Activated T-helper 2 cell treated with anti-CD3 and anti-CD28 coated beads, Interferon-gamma antibody, Interleukin-2, Interleukin-4, amounts not matched to agents 10 μg/mL and 5 μg/mL and 100 μg/mL, durations not matched to agents 14 hours and 24 hours and 36 hours (primary cell): ENCODE measurements at regions of chr18 and their contacts with region 1.

Region 1: DNA sequence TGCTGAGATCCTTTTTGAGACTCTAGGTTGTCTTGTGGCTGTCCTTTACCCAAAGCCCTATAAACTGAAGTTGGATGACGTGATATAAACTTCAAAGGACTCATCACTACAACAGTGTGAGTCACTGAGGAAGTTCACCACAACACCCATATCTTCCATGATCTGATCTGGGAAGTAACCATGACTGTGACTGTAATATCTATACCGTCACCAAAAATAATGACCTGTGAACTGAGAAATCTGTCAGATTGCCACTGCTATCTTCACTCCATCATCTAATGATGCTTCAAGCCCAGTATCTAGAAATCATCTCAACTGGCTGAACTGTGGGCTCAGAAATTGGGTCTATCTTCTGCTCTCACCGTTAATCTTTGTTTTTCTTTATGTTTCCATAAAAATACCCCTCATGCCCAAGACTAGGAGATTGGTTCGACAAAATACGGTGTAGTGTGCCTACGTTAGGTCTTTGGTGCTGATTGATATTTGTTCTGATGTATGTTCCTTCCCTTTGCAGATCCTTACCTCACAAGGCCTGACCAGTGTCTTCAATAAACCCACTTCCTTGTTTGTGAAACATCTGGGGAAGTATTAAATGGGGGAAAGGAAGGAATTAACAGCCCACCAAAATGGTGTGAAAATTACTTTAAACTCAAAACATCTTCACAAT is 78.2 kb downstream of the MYL12B start:
- DNase-seq: no peak
- H3K4me3 Mint-ChIP-seq: no peak overlapping the region
- H3K27ac Mint-ChIP-seq: peak overlapping the region; percentile 48
- H3K4me1 Mint-ChIP-seq: peaks cover 19% of the 10 kb centered on the region
- H3K27me3 Mint-ChIP-seq: no peaks in the 10 kb centered on the region

Region 2: GRCh38 chr18:3305354-3305762 is 34.8 kb before region 1 on chr18:
- intact Hi-C with region 1: loop called (anchors 1 kb)
- DNase-seq: peak; percentile 39
- H3K4me3 Mint-ChIP-seq: peak overlapping the region; percentile 20
- H3K27ac Mint-ChIP-seq: peak overlapping the region; percentile 99
- H3K4me1 Mint-ChIP-seq: peaks cover 22% of the 10 kb centered on the region
- H3K27me3 Mint-ChIP-seq: peaks cover 22% of the 10 kb centered on the region

Region 3: DNA sequence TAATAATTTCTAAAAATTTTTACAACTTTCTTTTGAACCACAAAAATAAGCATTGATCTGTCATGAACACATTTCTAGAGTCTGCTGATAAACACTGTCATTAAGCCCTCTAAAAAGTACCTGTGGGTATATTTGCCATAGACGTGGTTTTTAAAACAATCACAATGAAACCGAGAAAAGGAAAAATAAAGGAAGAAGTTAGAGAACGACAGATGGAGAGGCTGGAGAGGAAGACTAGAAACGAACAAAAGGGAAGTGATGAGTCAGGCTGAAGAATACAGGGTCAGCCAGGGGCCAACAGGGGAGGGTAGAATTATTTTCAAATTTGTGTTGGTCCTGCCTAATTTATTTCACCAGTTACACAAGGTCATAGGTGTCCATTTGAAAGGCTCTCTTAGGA is 16.2 kb before region 1 on chr18:
- intact Hi-C with region 1: loop called (anchors 2 kb)
- DNase-seq: no peak
- H3K4me3 Mint-ChIP-seq: no peak overlapping the region
- H3K27ac Mint-ChIP-seq: no peak overlapping the region
- H3K4me1 Mint-ChIP-seq: peaks cover 26% of the 10 kb centered on the region
- H3K27me3 Mint-ChIP-seq: peaks cover 9% of the 10 kb centered on the region

Region 4: DNA sequence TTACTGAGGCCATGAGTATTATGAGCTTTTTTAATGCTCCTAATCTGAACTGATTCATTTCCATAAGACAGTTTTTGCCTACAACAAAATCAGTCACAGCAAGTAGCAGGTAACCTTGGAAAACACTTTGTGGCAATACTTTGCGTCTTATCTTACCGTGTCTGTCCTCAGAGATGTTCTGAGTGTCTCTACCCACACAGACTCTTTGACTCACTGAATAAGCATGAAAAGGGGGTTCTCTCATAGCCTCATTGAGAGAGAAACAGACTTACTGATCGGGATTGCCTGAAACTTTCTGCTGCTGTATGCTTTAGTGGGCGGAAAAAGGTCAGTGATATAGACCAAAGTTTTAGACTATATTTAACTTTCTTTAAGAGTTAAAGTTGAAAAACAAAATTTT is 14.4 kb after region 1 on chr18:
- intact Hi-C with region 1: loop called (anchors 1 kb)
- DNase-seq: no peak
- H3K4me3 Mint-ChIP-seq: no peak overlapping the region
- H3K27ac Mint-ChIP-seq: peak overlapping the region; percentile 83
- H3K4me1 Mint-ChIP-seq: peaks cover 35% of the 10 kb centered on the region
- H3K27me3 Mint-ChIP-seq: no peaks in the 10 kb centered on the region

Region 5: DNA sequence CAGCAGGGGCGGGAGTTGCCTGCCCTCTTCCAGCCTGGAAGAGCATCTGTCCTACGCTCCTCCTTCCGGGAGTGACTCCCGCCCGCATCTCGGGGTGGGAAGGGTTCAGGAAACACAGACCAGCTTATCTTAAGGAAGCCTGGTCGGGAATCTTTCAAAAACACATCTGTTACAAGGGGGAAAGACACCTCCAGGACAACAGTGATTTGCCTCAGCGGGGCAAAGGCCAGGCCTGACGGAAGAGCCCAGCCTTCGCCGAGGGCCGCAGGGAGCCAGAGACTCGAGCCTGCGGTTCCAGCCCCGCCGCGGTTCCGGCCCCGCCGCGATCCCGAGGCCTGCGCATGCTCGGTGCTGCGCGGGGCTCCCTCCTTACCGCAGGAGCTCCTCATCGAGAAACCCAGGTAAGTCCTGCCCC is 71.7 kb after region 1 on chr18:
- intact Hi-C with region 1: loop called (anchors 1 kb)
- DNase-seq: no peak
- H3K4me3 Mint-ChIP-seq: peak overlapping the region; percentile 13
- H3K27ac Mint-ChIP-seq: no peak overlapping the region
- H3K4me1 Mint-ChIP-seq: peaks cover 13% of the 10 kb centered on the region
- H3K27me3 Mint-ChIP-seq: peaks cover 3% of the 10 kb centered on the region